ENCODE measurements at regions of chrX and their contacts with region 1.

Region 1: DNA sequence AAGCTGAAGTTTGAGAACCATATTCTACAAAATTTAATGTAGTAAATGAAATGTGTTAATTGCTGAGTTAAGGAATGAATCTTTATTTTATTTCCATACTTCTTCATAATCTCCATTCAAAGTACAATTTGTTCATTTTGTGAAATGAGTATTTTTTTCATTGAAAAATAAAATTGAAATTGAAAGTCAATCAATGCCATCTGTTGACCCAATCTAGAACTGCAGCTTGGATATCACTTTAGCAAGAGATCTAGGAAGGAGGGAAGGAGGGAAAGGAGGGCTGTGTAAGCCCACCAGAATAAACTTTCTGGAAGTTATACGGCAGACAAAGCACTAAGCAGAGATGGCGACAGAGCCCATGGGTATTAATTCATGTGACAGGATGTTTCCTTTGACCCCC is 128.4 kb downstream of the ZMAT1 start:
- H3K4me3 ChIP-seq: no peak overlapping the region
- H3K27ac ChIP-seq: no peak overlapping the region
- H3K4me1 ChIP-seq: no peaks in the 10 kb centered on the region
- CTCF ChIP-seq: no peak

Region 2: GRCh38 chrX:101595739-101596419 is 207.6 kb before region 1 on chrX:
- CTCF ChIA-PET with region 1: interaction called, 22 read pairs
- POLR2A ChIA-PET with region 1: no interaction called
- H3K4me3 ChIP-seq: no peak overlapping the region
- H3K27ac ChIP-seq: no peak overlapping the region
- H3K4me1 ChIP-seq: no peaks in the 10 kb centered on the region
- CTCF ChIP-seq: peak; percentile 69

Region 3: GRCh38 chrX:101925733-101926132 is 122.3 kb after region 1 on chrX:
- CTCF ChIA-PET with region 1: no interaction called
- POLR2A ChIA-PET with region 1: no interaction called
- H3K4me3 ChIP-seq: no peak overlapping the region
- H3K27ac ChIP-seq: no peak overlapping the region
- H3K4me1 ChIP-seq: no peaks in the 10 kb centered on the region
- CTCF ChIP-seq: no peak

Measured in HEK293 (cell line).